ENCODE measurements at regions of chr2 and their contacts with region 1.

Region 1: DNA sequence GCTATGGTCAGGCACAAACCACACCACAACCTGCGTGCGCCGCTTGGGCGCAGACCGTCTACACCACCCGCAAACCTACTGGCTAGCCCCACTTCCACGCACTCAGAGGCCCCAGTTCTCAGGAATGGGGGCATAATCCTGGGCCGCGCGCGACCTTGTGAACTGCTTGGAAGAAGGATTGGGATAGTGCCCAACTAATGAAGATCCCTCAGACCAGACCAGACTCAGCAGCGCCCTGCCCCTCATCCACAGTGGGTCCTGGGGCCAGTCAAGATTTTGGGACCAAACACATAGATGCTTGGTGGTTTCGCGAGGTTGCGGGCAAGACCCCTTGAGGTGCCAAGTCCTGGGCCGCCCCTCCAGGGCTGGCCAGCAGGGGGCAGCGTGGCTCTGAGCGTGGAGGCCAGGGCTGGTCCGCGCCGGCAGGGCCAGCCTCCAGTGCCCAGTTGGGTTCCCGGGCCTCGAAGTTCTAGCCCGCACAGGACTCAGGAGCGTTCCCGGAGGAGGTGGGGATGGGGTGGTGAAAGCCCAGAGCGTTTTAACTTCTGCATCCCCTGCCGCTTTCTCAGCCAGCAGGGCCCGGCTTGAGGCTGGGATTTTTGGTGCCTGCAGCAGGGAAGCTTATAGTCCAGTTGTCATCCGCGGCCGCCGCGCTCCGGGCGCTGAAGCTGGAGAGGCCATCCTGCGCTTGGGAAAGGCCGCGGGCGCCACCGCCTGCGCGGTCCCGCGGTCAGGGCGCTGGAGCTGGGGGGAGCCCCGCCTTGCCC is 8.3 kb downstream of the OSR1 start:
- DNase-seq: peak in 3 of 5 donors; percentile 25 to 51 (median 46)
- H3K4me3 ChIP-seq: no peak overlapping the region
- H3K27ac ChIP-seq: no peak overlapping the region
- H3K4me1 ChIP-seq: peaks cover 3% of the 10 kb centered on the region
- H3K27me3 ChIP-seq: no peaks in the 10 kb centered on the region
- CTCF ChIP-seq: no peak
- EP300 ChIP-seq: no peak
- POLR2A ChIP-seq: no peak

Region 2: GRCh38 chr2:18991177-18992168 is 358.6 kb before region 1 on chr2:
- intact Hi-C with region 1: loop called in 1 of 4 experiments (anchors 10 kb)
- DNase-seq: peak; percentile 12 to 46 (median 26)
- H3K4me3 ChIP-seq: no peak overlapping the region
- H3K27ac ChIP-seq: no peak overlapping the region
- H3K4me1 ChIP-seq: peaks cover 3% of the 10 kb centered on the region
- H3K27me3 ChIP-seq: no peaks in the 10 kb centered on the region
- CTCF ChIP-seq: no peak
- EP300 ChIP-seq: no peak
- POLR2A ChIP-seq: no peak

Measured in ovary (tissue), 10 donors.